Adrenal gland (tissue), 19 donors: ENCODE measurements at regions of chr9 and their contacts with region 1.

Region 1: DNA sequence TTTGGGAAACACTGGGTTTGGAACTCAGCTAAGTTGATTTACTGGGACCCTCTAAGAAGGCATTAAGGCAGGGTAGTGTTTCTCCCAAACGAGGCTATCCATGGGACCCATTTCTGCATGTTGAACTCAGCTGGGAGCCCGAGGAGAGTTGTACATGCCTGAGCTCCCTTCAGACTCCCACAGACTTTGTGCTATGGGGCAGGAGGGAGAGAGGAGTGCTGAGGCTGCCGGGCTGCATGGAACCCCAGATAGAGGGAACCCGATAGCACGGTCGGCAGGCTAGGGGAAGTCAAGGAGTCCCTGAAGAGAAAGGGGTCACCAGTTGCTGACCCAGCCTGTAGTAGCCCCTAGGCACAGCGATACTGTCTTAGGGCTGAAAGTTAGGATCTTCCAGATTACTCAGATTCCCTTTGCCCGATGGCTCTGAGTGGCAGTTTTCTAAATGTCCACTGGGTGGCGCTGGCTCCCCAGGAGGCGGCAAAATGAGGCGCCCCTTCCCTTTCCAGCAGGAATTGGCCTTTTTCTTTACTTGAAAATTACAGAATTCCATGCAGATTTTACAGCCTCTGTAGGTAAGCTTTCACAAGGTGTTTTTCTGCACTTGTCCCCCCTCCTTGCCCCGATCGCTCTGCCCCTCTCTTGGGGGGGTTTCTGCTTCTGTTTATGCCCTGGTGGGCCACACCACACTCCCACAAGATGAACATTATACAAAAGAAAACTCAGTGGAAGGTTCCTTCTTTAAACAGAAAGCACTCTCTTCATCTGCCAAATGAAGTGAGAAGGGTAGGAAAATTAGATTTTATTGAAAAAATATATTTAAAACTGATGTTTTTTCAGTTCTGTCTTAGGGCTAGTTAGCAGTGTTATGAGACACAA is 17.8 kb downstream of the NANS start:
- DNase-seq: peak; percentile 50 to 82 (median 66)
- H3K4me3 ChIP-seq: no peak overlapping the region
- H3K27ac ChIP-seq: peak overlapping the region in 1 of 5 donors; percentile 0
- H3K4me1 ChIP-seq: no peaks in the 10 kb centered on the region
- H3K27me3 ChIP-seq: no peaks in the 10 kb centered on the region
- CTCF ChIP-seq: peak; percentile 82 to 97 (median 84)
- POLR2A ChIP-seq: no peak

Region 2: DNA sequence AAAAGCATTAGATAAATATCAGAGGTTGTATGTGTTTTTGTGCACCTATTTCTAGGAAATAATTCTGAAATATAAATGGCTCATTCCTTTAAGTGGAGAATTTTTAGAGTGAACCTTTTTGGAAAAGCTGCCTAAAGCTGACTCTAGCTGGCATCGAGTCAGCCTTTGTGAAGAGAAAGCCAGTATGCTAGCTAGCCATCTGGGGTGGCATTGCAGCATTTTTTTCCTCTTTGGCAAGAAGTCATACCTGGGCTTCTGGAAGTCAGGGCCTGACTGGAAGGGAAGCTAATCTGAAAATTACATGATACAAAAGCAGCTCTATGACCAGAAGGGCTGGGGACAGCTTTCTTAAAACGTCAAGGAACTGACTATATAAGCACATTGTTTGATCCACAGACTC is 71.5 kb before region 1 on chr9:
- intact Hi-C with region 1: no loop called
- DNase-seq: no peak
- H3K4me3 ChIP-seq: no peak overlapping the region
- H3K27ac ChIP-seq: no peak overlapping the region
- H3K4me1 ChIP-seq: peaks cover 0 to under 1% of the 10 kb centered on the region in 2 donors
- H3K27me3 ChIP-seq: no peaks in the 10 kb centered on the region
- CTCF ChIP-seq: no peak
- POLR2A ChIP-seq: no peak

Region 3: GRCh38 chr9:98207606-98208005 is 133.3 kb after region 1 on chr9:
- intact Hi-C with region 1: loop called (anchors 5 to 10 kb)
- DNase-seq: no peak
- H3K4me3 ChIP-seq: no peak overlapping the region
- H3K27ac ChIP-seq: no peak overlapping the region
- H3K4me1 ChIP-seq: no peaks in the 10 kb centered on the region
- H3K27me3 ChIP-seq: no peaks in the 10 kb centered on the region
- CTCF ChIP-seq: no peak
- POLR2A ChIP-seq: no peak

Region 4: DNA sequence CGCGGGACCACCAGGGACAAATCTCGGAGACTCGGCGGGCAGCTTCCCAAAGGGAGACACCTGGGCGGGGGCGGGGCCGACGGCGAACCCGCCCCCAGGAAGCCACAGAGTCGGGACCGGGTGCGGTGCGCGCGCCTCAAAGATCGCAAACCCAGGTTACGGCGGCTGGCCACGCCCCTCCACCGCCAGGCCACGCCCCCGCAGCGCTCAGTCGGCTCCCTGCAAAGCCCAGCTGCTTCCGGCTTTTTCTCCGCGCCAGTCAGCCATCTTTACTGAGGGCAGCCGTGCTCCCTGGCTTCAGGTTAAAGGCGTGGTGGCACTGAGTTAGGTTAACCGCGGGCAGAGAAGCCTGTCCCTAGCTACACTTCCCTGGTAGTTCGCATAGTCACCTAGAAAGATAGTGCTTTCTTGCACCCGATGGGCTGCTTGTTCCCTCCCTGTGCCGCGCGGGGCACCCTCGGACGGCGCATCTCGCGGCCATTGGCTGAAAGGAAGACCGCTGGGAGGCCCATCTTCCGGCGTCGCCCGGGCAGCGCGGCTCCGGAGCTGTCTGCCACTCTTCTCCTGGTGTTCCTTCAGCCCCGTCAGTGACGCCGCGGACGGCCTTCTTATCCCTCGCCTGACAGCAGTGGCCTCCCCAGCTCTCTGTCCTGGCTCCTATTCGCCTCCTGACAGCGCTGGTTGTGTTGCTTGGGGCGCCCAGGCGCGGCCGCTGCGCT is 181.4 kb after region 1 on chr9 and contains the start of gene TBC1D2:
- intact Hi-C with region 1: loop called (anchors 5 to 10 kb)
- DNase-seq: peak; percentile 94 to 98 (median 96)
- H3K4me3 ChIP-seq: peak within 1 kb of the TSS; percentile 49 to 86 (median 64)
- H3K27ac ChIP-seq: peak within 1 kb of the TSS; percentile 71 to 98 (median 94)
- H3K4me1 ChIP-seq: peaks cover 0 to 8% of the 10 kb centered on the region in 2 donors
- H3K27me3 ChIP-seq: no peaks in the 10 kb centered on the region
- CTCF ChIP-seq: peak in 4 of 6 experiments; percentile 10 to 39 (median 24)
- POLR2A ChIP-seq: peak; percentile 41 to 64
- total RNA-seq, gene TBC1D2: 0.67 to 21.9 (median 11.3) TPM

Region 5: DNA sequence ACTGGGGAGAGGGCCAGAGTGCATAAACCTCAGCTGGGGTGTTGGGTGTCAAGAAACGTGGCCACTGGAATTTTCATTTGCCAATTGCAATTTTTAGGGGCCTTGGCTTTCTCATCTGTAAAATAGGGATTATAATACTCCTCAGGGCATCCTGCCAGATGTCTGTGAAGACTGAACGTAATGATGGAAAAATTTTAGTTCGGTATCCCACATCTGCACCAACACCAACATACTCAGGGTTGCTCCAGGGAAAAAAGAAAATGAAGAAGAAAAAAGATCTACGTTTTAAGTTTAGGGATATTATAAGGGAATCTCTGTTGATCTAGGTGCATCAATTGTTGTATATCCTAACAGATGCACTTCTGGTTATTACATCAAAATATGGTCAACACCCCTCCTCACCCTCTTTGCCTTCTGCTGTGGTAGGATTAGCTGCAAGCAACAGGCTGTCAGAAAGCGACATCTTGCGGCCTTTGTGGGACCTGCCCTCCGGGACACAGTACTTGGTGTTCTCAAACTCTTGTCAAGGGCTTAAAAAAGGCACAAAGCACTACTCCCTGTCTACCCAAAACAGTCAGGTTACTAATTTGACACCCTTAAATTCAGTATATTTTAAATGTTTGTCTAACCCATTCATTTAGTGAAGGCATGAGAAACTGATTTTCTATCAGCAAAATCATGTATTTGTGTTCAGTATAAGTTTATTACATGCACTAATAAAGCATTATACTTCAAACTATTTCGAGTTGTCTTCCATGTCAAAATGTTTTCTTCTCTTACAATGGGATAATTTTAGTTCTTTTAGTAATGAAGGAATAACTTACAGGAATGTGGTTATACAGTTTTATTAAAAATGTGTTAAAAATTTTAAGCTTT is 189.4 kb after region 1 on chr9:
- intact Hi-C with region 1: loop called (anchors 5 to 10 kb)
- DNase-seq: peak; percentile 76 to 94 (median 83)
- H3K4me3 ChIP-seq: no peak overlapping the region
- H3K27ac ChIP-seq: no peak overlapping the region
- H3K4me1 ChIP-seq: no peaks in the 10 kb centered on the region
- H3K27me3 ChIP-seq: no peaks in the 10 kb centered on the region
- CTCF ChIP-seq: peak; percentile 80 to 94 (median 93)
- POLR2A ChIP-seq: no peak